HEK293 (cell line): ENCODE measurements at regions of chr9 and their contacts with region 1.

Region 1: GRCh38 chr9:107340920-107341632 is 58.0 kb downstream of the RAD23B start:
- H3K4me3 ChIP-seq: no peak overlapping the region
- H3K27ac ChIP-seq: no peak overlapping the region
- H3K4me1 ChIP-seq: no peaks in the 10 kb centered on the region
- CTCF ChIP-seq: peak; percentile 80

Region 2: DNA sequence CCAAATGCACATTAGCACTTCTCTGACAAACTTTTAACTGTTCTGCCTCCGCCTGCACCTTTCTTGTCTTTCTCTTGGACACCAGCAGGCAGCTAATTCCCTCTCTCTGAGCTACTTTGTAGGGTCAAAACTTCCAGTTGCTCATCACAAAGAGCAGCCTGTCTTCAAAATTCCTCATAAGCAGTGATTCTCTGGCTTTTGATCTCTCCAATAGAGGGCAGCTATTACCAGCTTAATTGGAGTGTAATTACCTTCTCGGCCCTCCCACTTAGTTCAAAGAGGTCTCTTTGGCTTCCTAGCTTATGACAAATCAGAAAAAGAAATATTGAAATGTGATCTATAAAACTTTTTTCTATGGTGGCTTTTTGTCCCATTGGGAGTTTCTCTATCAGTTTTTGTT is 101.6 kb before region 1 on chr9:
- CTCF ChIA-PET with region 1: interaction called, 11 read pairs
- POLR2A ChIA-PET with region 1: no interaction called
- H3K4me3 ChIP-seq: no peak overlapping the region
- H3K27ac ChIP-seq: no peak overlapping the region
- H3K4me1 ChIP-seq: peaks cover 4% of the 10 kb centered on the region; the same call in 1 of the 2 replicates
- CTCF ChIP-seq: no peak

Region 3: GRCh38 chr9:107260437-107261086 is 80.5 kb before region 1 on chr9:
- CTCF ChIA-PET with region 1: interaction called, 10 read pairs
- POLR2A ChIA-PET with region 1: no interaction called
- H3K4me3 ChIP-seq: no peak overlapping the region
- H3K27ac ChIP-seq: no peak overlapping the region
- H3K4me1 ChIP-seq: no peaks in the 10 kb centered on the region
- CTCF ChIP-seq: no peak

Region 4: DNA sequence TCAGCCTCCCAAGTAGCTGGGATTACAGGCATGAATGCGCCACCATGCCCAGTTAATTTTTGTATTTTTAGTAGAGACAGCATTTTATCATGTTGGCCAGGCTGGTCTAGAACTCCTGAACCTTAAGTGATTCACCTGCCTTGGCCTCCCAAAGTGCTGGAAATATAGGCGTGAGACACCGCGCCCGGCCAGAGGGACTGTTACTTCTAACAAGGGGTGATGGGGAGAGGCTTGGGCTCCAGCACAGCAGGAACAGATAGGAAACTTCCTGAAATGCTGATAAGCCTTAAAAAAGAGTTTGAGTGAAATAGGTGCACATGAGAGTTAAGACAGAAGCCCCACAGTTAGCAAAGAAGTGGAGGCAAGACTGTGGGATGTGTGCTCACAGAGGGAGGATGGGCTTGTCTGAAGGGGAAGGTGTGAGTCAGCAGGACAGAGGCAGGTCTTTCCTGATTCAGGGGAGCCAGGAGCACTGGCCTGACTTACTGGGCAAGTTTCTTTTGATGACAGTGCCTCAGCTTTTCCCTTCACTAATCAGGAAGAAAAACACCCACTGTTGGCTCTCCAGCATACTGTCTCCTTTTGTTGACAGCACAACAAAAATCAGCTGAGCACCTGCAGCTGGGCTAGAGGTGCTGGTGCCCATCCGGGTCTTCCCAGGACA is 10.4 kb after region 1 on chr9:
- CTCF ChIA-PET with region 1: interaction called, 34 read pairs
- POLR2A ChIA-PET with region 1: no interaction called
- H3K4me3 ChIP-seq: no peak overlapping the region
- H3K27ac ChIP-seq: no peak overlapping the region
- H3K4me1 ChIP-seq: no peaks in the 10 kb centered on the region
- CTCF ChIP-seq: no peak